Aorta (tissue), 5 donors: ENCODE measurements at regions of chr18 and their contacts with region 1.

Region 1: GRCh38 chr18:3129053-3129864 is 90.5 kb downstream of the MYOM1 start:
- DNase-seq: peak; percentile 90 to 94
- ATAC-seq: peak; percentile 90
- H3K4me3 ChIP-seq: no peak overlapping the region
- H3K27ac ChIP-seq: no peak overlapping the region
- H3K4me1 ChIP-seq: no peaks in the 10 kb centered on the region
- H3K27me3 ChIP-seq: no peaks in the 10 kb centered on the region

Region 2: DNA sequence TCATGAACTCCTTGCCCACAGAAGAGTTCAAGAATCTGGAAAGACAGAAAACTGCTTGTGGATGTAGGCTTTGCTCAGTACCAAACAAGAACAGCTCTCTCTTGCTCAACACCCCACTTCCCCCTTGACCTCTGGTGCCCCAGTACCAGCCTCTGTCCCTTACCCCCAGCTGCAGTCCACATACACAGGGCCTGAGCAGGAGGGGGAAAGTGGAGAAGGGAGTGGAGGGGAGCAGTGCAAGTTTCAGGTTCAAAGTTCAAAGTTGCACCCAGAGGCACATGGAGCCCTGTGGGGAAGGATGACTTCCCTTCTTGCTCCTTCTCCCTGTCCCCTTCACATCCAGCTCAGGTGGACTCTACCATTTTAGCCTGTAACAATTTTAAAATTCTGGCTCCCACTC is 55.2 kb before region 1 on chr18:
- intact Hi-C with region 1: loop called in 1 of 2 experiments (anchors 10 kb)
- DNase-seq: no peak
- ATAC-seq: peak; percentile 41
- H3K4me3 ChIP-seq: no peak overlapping the region
- H3K27ac ChIP-seq: no peak overlapping the region
- H3K4me1 ChIP-seq: no peaks in the 10 kb centered on the region
- H3K27me3 ChIP-seq: no peaks in the 10 kb centered on the region

Region 3: GRCh38 chr18:3088449-3088848 is 40.8 kb before region 1 on chr18:
- intact Hi-C with region 1: no loop called
- DNase-seq: no peak
- ATAC-seq: no peak
- H3K4me3 ChIP-seq: no peak overlapping the region
- H3K27ac ChIP-seq: no peak overlapping the region
- H3K4me1 ChIP-seq: peaks cover 0 to 3% of the 10 kb centered on the region in 2 donors
- H3K27me3 ChIP-seq: no peaks in the 10 kb centered on the region